ENCODE measurements at regions of chr3 and their contacts with region 1.

Region 1: DNA sequence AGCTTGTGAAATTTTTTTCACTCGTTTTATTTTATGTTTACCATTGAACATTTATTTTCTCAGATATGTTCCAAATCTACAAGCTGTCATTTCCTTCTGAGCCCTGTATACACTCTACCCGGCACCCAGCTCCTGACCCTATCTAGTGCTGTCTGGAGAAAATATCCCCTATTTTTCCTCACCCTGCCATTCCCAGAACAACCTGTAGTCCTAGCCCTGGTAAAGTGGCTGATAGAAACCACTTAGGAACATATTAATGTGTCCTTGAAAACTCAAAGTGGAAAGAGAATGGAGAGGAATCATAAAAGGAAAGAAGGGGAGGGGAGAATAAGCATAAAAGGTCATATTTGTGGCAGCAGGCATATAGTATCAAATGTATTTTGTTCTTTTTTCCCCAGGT is 8.2 kb upstream of the TIMMDC1 start:
- DNase-seq: no peak
- CTCF ChIP-seq: no peak

Region 2: DNA sequence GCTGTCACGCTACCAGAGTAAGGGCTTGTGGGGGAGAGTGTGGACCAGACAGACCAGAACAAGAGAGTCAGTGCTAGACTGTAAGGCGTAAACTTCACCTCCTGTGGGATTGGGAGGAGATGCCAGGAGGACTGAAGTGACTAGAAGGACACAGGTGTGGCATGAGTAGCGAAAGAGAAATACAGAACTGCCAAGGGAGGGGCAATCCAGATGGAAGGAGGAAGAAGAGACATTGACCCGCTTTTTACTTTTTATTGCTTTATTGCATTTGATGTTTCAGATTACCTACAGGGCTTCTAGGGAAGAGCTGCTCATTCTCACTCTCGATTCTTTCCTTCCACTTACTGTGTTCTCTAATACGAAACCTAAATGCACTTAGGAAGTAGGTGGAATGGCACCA is 19.3 kb before region 1 on chr3:
- CTCF ChIA-PET with region 1: interaction called, 13 read pairs
- POLR2A ChIA-PET with region 1: no interaction called
- DNase-seq: no peak
- CTCF ChIP-seq: no peak

Region 3: GRCh38 chr3:119543147-119543546 is 53.0 kb after region 1 on chr3:
- CTCF ChIA-PET with region 1: no interaction called
- POLR2A ChIA-PET with region 1: no interaction called
- DNase-seq: no peak
- CTCF ChIP-seq: no peak

Region 4: GRCh38 chr3:119918992-119919933 is 429.1 kb after region 1 on chr3:
- CTCF ChIA-PET with region 1: no interaction called
- POLR2A ChIA-PET with region 1: no interaction called
- DNase-seq: no peak
- CTCF ChIP-seq: no peak